ENCODE measurements at regions of chr20 and their contacts with region 1.

Region 1: GRCh38 chr20:3875378-3875974 is 13.7 kb upstream of the PANK2 start:
- DNase-seq: no peak
- H3K4me3 ChIP-seq: no peak overlapping the region
- H3K27me3 ChIP-seq: no peaks in the 10 kb centered on the region
- CTCF ChIP-seq: no peak

Region 2: DNA sequence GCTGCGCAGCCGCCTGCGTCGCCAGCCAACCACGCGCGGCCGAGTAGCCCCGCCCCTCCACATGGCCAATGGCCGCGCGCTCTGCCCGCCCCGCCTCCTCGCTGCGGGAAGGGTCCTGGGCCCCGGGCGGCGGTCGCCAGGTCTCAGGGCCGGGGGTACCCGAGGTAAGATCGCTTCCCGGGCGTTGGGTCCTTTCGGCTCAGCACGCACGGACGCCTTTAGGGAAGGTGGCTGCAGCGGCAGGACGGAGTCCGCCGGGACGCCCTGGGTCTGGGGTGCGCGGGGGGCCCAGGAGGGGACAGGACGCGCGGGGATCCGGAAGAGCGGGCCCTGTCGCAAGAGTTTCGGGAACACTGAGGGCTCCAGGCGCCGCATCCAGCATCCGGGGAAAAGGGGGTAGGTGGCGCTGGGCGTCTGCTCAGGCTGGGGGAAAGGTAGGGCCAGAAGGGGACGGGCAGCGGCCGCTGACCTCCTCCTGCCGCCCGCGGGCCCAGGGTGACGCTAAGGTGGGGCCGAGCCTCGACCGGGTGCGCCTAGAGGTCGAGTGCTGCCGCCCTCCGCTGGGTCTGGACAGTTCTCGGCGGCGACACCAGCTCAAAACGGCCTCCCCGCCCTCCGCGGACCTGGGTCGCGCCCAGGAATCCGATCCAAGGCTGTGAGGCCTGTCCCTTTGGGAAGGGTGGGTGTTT is 28.6 kb before region 1 on chr20 and contains the start of gene MAVS:
- CTCF ChIA-PET with region 1: no interaction called
- POLR2A ChIA-PET with region 1: no interaction called
- DNase-seq: no peak
- H3K4me3 ChIP-seq: peak within 1 kb of the TSS; percentile 73
- H3K27me3 ChIP-seq: no peaks in the 10 kb centered on the region
- CTCF ChIP-seq: no peak
- polyA plus RNA-seq, gene MAVS: 14.8 and 17.4 TPM in 2 replicates

Region 3: DNA sequence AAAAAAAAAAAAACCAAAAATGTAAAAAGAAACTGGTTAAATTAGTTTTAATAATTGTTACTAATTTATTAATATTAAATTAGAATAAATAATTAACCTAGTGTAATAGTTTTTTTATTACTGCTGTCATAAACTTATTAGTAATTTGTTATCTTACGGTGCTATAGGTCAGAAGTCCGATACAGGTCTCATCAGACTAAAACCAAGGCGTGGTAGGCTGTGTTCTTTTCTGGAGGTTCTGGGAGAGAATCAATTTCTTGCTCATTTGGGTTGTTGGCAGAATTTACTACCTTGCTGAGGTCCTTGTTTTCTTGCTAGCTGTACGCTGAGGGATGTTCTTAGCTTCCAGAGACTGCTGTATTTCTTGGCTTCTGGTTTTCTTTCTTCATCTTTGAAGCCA is 225.8 kb after region 1 on chr20:
- CTCF ChIA-PET with region 1: no interaction called
- POLR2A ChIA-PET with region 1: interaction called, 16 read pairs
- DNase-seq: no peak
- H3K4me3 ChIP-seq: no peak overlapping the region
- H3K27me3 ChIP-seq: 0 out of 2 replicates have a peak, but pooled peaks cover 1% of the 10 kb centered on the region
- CTCF ChIP-seq: no peak